ENCODE measurements at regions of chr3 and their contacts with region 1.

Region 1: DNA sequence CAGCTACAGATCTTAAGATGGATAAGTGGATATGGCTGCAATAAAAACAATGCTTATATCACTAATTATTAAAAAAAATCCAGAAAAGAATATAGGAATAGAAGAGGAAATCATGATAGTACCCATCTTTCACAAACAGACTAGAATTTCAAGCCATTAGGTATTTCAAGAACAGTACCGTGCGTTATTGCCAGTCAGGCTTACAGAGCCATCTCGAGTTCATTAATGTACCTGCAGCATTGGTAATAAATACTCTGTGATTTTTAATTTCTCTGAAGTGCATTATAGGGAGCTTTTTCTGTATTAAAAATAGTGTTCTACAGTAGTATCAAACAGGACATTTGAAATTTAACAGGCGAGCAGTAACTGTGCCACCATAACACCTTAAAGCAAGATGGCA is 35.7 kb downstream of the ST3GAL6 start:
- DNase-seq: no peak
- H3K4me3 ChIP-seq: no peak overlapping the region
- CTCF ChIP-seq: no peak

Region 2: GRCh38 chr3:98746882-98747281 is 51.9 kb before region 1 on chr3:
- in situ Hi-C with region 1: loop called (anchors 5 kb)
- DNase-seq: no peak
- H3K4me3 ChIP-seq: no peak overlapping the region
- CTCF ChIP-seq: no peak

Region 3: GRCh38 chr3:98855806-98856400 is 57.1 kb after region 1 on chr3:
- in situ Hi-C with region 1: no loop called
- DNase-seq: peak; percentile 93
- H3K4me3 ChIP-seq: no peak overlapping the region
- CTCF ChIP-seq: no peak

Measured in astrocyte of the cerebellum (primary cell).